ENCODE measurements at regions of chr11 and their contacts with region 1.

Region 1: GRCh38 chr11:66855574-66856495 is 1.0 kb upstream of the LRFN4 start:
- DNase-seq: peak; percentile 97 to 98 (median 98)
- ATAC-seq: peak; percentile 95
- H3K4me3 ChIP-seq: peak overlapping the region; percentile 68
- H3K27ac ChIP-seq: peak overlapping the region; percentile 98
- H3K4me1 ChIP-seq: peaks cover 11 to 95% of the 10 kb centered on the region in 2 experiments; a peak in 4 of 5 replicates
- H3K27me3 ChIP-seq: no peaks in the 10 kb centered on the region
- CTCF ChIP-seq: 0 out of 6 replicates have a peak, but pooled peaks of 1 of the 3 experiments have one; percentile 3
- EP300 ChIP-seq: peak; percentile 48
- POLR2A ChIP-seq: peak; percentile 95
- RAD21 ChIP-seq: no peak

Region 2: GRCh38 chr11:66842896-66843775 is 12.7 kb before region 1 on chr11 and contains the start of gene RCE1:
- CTCF ChIA-PET with region 1: no interaction called
- POLR2A ChIA-PET with region 1: interaction called, 58 read pairs
- in situ Hi-C with region 1: no loop called
- intact Hi-C with region 1: no loop called
- DNase-seq: peak; percentile 93 to 95 (median 94)
- ATAC-seq: peak; percentile 81
- H3K4me3 ChIP-seq: peak within 1 kb of the TSS; percentile 99
- H3K27ac ChIP-seq: peak within 1 kb of the TSS; percentile 98
- H3K4me1 ChIP-seq: peaks cover 44 to 56% of the 10 kb centered on the region in 2 experiments
- H3K27me3 ChIP-seq: no peaks in the 10 kb centered on the region
- CTCF ChIP-seq: 0 out of 6 replicates have a peak, but pooled peaks of 1 of the 3 experiments have one; percentile 0
- EP300 ChIP-seq: no peak; the same call in 1 of the 2 replicates
- POLR2A ChIP-seq: peak; percentile 91
- RAD21 ChIP-seq: no peak; a peak in 1 of 4 replicates
- polyA plus RNA-seq, gene RCE1: 0.75 to 3.0 TPM

Region 3: DNA sequence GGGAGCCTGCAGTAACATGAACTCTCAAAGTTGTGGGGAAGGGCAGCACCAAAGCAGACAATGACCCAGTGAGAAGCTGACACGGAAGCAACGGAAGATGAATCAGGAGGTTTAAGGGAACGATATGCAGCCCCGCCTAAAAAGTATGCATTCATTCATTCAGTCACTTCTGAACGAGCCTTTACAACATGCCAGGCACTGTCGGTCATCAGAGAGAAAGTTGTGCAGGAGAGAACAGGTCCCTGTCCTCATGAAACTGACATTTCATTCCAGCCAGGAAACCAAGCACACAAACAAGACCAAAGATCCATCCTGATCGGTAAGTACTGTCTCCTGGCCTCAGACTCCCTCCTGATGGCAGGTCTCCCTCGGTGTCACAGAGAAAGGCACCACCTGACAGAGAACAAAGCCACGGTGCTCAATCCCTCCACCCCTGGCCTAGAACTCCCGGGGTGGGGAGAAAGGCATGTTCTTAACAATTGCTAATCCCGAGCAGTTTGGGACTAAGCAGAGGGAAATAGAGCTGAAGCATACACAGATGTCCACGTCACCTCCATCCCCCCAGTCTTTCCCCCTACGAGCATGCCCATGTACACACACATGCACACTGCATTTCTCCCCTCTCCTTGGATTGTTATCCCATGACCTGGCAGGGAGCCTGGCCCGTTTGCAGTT is 50.4 kb after region 1 on chr11:
- CTCF ChIA-PET with region 1: no interaction called
- POLR2A ChIA-PET with region 1: no interaction called
- in situ Hi-C with region 1: no loop called
- intact Hi-C with region 1: no loop called
- DNase-seq: no peak
- ATAC-seq: no peak
- H3K4me3 ChIP-seq: no peak overlapping the region
- H3K27ac ChIP-seq: no peak overlapping the region; the same call in 2 of the 3 replicates
- H3K4me1 ChIP-seq: peaks cover 16 to 24% of the 10 kb centered on the region in 2 experiments
- H3K27me3 ChIP-seq: no peaks in the 10 kb centered on the region
- CTCF ChIP-seq: no peak
- EP300 ChIP-seq: no peak
- POLR2A ChIP-seq: no peak
- RAD21 ChIP-seq: no peak